ENCODE measurements at regions of chr2 and their contacts with region 1.

Region 1: GRCh38 chr2:102240640-102241370 is 54.0 kb downstream of the IL1RL2 start:
- DNase-seq: peak; percentile 94
- ATAC-seq: peak; percentile 92

Region 2: GRCh38 chr2:102166189-102166845 is 74.5 kb before region 1 on chr2:
- intact Hi-C with region 1: no loop called
- DNase-seq: no peak
- ATAC-seq: peak; percentile 76

Region 3: DNA sequence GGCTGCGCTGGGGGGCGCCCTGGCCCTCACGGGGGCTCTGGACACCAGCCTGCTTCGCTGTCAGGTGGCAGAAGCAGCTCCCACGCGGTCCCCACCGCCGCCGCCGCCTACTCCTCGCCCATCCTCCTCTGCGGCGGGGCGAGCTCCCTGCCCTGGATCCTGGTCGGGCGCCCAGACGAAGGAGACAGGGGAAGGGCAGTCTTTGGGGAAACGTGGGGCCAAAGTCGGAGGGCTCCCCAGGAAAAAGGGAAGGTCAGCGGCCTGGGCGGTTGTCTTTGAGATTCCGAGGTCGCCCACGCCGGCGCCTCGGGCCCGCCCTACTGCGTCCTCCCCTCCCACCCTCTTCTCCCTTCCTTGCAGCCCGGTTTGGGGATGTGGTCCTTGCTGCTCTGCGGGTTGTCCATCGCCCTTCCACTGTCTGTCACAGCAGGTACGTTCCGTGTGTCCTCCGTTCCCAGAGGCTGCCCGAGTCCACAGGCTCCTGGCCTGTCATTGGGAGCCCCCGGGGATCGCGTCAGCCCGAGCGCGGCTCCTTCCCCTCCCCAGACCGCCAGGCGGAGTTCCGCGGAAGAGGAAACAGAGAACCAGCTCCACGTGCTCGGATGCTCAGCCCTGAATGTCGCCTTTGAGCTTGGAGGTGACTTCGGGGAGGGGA is 53.2 kb before region 1 on chr2:
- intact Hi-C with region 1: loop called (anchors 5 kb)
- DNase-seq: peak; percentile 82
- ATAC-seq: peak; percentile 91

Region 4: GRCh38 chr2:102442967-102443828 is 202.4 kb after region 1 on chr2:
- intact Hi-C with region 1: loop called (anchors 5 kb)
- DNase-seq: no peak
- ATAC-seq: no peak

Measured in Right ventricle myocardium inferior (tissue), 1 donor.